ENCODE measurements at regions of chr7 and their contacts with region 1.

Region 1: DNA sequence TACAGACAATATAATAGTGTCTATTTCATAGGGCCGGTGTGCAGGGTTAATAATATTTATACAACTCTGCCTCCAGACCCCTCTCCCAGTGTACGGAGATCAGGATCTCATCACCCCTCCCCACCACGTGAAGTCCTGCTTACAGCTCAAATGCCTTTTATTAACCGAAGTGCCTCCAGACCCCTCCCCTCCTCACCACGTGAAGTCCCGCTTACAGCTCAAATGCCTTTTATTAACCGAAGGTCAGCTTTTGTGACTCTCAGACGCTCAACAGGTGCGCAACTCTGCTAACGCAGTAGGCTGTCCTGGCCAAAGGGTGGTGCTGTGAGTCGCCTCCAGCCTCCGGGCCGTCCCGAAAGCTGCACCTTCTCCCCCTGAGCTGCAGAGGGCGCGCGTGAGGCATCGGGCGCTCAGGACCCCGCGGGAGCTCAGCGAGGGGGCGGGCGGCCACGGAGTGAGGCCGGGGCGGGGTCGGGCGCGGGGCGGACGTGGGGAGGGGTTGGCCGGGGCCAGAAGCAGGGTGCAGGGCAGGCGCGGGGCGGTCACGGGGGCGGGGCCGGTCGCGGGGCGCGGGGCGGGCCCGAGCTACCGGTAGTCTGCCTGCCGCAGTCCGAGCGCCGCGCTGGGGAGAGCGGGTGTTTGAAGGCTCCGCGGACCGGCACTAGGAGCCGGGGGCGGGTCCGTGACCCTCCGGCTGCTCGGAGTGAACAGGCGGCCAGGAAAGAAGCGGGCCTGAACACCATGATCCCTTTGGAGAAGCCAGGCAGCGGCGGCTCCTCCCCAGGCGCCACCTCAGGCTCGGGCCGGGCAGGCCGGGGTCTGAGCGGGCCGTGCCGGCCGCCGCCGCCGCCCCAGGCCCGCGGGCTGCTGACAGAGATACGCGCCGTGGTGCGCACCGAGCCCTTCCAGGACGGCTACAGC is at the start of gene STK17A:
- DNase-seq: peak; percentile 94
- ATAC-seq: peak; percentile 84
- H3K4me3 Mint-ChIP-seq: peak within 1 kb of the TSS; percentile 92
- H3K27ac Mint-ChIP-seq: peak within 1 kb of the TSS; percentile 97
- H3K4me1 Mint-ChIP-seq: peaks cover 41% of the 10 kb centered on the region
- H3K27me3 Mint-ChIP-seq: no peaks in the 10 kb centered on the region
- CTCF ChIP-seq: peak; percentile 44
- total RNA-seq, gene STK17A: 67.1 and 68.6 TPM in 2 replicates

Region 2: DNA sequence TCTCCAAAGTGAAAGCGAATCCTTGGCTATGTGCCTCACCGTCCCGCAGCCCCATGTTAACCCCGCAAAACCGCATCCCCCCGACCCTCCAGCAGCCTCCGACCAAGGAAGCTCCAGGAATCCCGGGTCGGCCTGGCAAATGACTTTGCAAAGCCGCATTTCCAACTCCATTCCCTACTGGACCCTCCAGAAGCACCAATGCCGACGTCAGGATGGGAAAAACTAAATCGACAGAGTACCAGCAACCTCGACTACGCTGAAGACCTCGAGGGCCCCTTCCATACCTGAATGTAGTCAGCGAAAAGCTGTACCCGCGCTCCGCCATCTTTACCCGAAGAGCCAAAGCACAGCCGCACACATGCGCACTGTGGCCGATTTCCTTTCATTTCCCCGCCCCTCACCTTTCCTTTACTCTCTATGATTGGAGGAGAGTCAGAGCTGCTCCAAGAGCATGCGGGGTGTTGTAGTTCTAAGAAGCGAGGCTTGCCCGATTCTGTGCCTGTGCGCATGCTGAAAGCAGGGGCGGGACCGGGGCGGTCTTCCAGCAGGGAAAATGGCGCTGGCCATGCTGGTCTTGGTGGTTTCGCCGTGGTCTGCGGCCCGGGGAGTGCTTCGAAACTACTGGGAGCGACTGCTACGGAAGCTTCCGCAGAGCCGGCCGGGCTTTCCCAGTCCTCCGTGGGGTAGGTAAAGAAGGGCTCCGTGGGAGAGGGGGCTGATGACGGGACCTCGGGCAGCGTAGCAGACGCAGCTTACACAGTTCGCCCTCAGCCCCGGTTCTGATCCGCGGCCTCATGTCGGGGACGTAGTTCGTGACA is 650.7 kb before region 1 on chr7 and contains the starts of genes MRPL32 and PSMA2:
- CTCF ChIA-PET with region 1: interaction called, 10 read pairs
- POLR2A ChIA-PET with region 1: interaction called, 21 read pairs
- intact Hi-C with region 1: loop called (anchors 2 kb)
- DNase-seq: peak; percentile 88
- ATAC-seq: peak; percentile 100
- H3K4me3 Mint-ChIP-seq: peak within 1 kb of the TSS; percentile 100
- H3K27ac Mint-ChIP-seq: peak within 1 kb of the TSS; percentile 97
- H3K4me1 Mint-ChIP-seq: peaks cover 57% of the 10 kb centered on the region
- H3K27me3 Mint-ChIP-seq: no peaks in the 10 kb centered on the region
- CTCF ChIP-seq: no peak
- total RNA-seq, gene MRPL32: 38.8 and 39.5 TPM in 2 replicates
- total RNA-seq, gene PSMA2: 88.1 and 109 TPM in 2 replicates

Region 3: GRCh38 chr7:43535810-43536585 is 46.8 kb before region 1 on chr7:
- CTCF ChIA-PET with region 1: no interaction called
- POLR2A ChIA-PET with region 1: no interaction called
- intact Hi-C with region 1: no loop called
- DNase-seq: no peak
- ATAC-seq: no peak
- H3K4me3 Mint-ChIP-seq: no peak overlapping the region
- H3K27ac Mint-ChIP-seq: no peak overlapping the region
- H3K4me1 Mint-ChIP-seq: no peaks in the 10 kb centered on the region
- H3K27me3 Mint-ChIP-seq: peaks cover 10% of the 10 kb centered on the region
- CTCF ChIP-seq: no peak

Region 4: DNA sequence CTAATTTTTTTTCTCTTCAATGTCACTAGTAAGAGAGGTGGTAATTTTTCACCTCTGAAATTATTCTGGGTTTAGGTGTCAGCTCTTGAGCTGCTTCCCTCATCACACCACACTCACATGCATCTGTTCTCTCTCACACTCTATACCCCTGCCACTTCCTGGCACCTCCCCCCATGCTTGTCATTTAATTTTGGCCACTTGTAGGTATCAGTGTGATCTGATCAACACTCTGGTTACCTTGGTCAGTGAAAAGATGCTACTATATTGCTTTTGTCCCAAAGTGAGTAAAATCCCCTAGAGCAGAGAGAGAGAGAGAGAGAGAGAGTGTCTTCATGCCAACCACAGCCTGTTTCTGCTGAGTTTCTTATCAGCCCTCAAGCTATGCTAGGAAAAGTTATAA is 42.7 kb after region 1 on chr7:
- CTCF ChIA-PET with region 1: interaction called, 43 read pairs
- POLR2A ChIA-PET with region 1: interaction called, 41 read pairs
- intact Hi-C with region 1: loop called (anchors 2 kb)
- DNase-seq: no peak
- ATAC-seq: peak; percentile 76
- H3K4me3 Mint-ChIP-seq: peak overlapping the region; percentile 51
- H3K27ac Mint-ChIP-seq: peak overlapping the region; percentile 85
- H3K4me1 Mint-ChIP-seq: peaks cover 84% of the 10 kb centered on the region
- H3K27me3 Mint-ChIP-seq: no peaks in the 10 kb centered on the region
- CTCF ChIP-seq: no peak

Region 5: DNA sequence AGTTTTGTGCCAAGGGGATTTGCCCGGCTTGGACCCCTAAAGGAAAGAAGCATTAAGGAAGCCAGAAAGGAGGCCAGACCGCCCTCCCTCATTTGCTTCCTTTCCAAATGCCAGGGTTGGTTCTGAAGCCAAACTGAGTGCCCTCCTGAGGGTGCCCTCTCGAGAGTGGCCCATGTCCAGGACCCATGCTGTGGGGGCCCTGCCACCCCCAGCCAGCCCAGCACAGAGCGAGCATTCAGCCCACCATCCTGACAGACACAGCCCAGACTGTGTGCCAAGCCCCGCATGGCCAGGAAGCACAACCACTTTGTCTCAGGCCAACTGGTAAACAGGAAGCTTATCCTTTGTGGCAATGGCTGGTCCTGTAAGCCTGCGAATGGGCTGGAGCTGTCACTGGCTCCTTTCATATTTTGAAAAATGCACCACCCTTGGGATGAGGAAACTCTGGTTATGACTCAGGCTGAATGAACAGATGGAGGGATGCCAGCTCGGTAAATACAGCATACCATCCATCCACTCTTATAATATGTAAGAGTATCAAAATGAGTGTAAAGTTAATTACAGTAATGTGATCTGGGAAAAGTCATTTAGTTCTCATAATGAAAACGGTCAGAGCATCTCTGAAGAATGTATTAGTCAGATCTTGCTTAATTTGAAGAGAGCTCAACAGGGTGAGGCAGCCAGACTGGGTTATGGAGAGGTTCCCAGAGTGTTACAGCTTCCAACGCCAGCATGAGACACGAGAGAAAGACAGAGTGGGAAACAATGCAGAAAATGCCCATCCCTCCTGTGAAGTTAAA is 65.1 kb after region 1 on chr7:
- CTCF ChIA-PET with region 1: interaction called, 80 read pairs
- POLR2A ChIA-PET with region 1: interaction called, 342 read pairs
- intact Hi-C with region 1: loop called (anchors 1 kb)
- DNase-seq: no peak
- ATAC-seq: peak; percentile 4
- H3K4me3 Mint-ChIP-seq: peak overlapping the region; percentile 72
- H3K27ac Mint-ChIP-seq: peak overlapping the region; percentile 90
- H3K4me1 Mint-ChIP-seq: peaks cover 96% of the 10 kb centered on the region
- H3K27me3 Mint-ChIP-seq: no peaks in the 10 kb centered on the region
- CTCF ChIP-seq: no peak

Region 6: GRCh38 chr7:43693687-43694398 is 111.1 kb after region 1 on chr7:
- CTCF ChIA-PET with region 1: interaction called, 648 read pairs
- POLR2A ChIA-PET with region 1: interaction called, 295 read pairs
- intact Hi-C with region 1: no loop called
- DNase-seq: no peak
- ATAC-seq: no peak
- H3K4me3 Mint-ChIP-seq: no peak overlapping the region
- H3K27ac Mint-ChIP-seq: no peak overlapping the region
- H3K4me1 Mint-ChIP-seq: peaks cover 41% of the 10 kb centered on the region
- H3K27me3 Mint-ChIP-seq: no peaks in the 10 kb centered on the region
- CTCF ChIP-seq: no peak

Region 7: GRCh38 chr7:43729214-43729923 is 146.6 kb after region 1 on chr7 and contains the start of gene COA1:
- CTCF ChIA-PET with region 1: interaction called, 37 read pairs
- POLR2A ChIA-PET with region 1: interaction called, 23 read pairs
- intact Hi-C with region 1: loop called (anchors 1 kb)
- DNase-seq: peak; percentile 75
- ATAC-seq: peak; percentile 92
- H3K4me3 Mint-ChIP-seq: peak within 1 kb of the TSS; percentile 95
- H3K27ac Mint-ChIP-seq: peak within 1 kb of the TSS; percentile 88
- H3K4me1 Mint-ChIP-seq: peaks cover 40% of the 10 kb centered on the region
- H3K27me3 Mint-ChIP-seq: no peaks in the 10 kb centered on the region
- CTCF ChIP-seq: no peak
- total RNA-seq, gene COA1: 49.2 and 56.9 TPM in 2 replicates

Region 8: DNA sequence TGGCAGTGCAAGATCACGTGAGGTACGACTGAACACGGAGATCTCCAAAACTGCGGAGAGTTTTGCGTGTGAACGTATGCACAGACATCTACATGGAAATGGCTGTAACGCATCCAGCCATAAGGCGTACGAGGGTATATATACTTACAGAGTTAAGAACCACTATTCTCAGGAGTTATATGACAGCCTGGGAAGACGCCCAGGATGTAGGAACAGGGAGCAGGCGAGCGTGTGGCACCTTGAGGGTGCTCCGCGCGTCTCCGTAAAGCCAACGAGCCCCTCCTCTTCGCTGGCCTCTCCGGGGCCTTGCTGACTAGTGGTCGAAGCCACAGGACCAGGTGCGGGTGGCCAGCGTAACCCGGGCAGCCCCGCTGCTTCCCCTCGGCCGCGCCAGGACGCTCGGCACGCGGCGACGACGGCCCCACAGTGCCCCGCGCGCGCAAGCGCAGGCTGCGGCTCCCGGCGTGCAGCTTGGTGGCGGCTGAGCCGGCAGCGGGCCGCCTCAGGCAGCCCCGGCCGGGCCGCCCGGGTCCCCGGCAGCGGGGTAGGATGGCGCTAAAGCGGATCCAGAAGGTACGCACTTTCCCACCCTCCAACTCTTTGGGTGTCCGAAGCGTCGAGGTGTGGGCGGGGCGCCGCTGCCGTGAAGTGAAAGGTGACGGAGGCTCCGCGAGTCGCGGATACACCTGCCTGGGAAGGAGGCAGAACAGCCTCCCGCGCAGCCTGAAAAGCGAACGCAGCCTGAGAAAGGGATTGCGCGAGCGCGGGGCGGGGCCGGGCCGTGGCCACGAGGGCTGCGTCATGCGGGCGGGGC is 343.4 kb after region 1 on chr7 and contains the start of gene UBE2D4:
- CTCF ChIA-PET with region 1: interaction called, 4 read pairs
- POLR2A ChIA-PET with region 1: interaction called, 3 read pairs
- intact Hi-C with region 1: loop called (anchors 5 kb)
- DNase-seq: peak; percentile 89
- ATAC-seq: peak; percentile 88
- H3K4me3 Mint-ChIP-seq: peak within 1 kb of the TSS; percentile 87
- H3K27ac Mint-ChIP-seq: peak within 1 kb of the TSS; percentile 93
- H3K4me1 Mint-ChIP-seq: peaks cover 24% of the 10 kb centered on the region
- H3K27me3 Mint-ChIP-seq: no peaks in the 10 kb centered on the region
- CTCF ChIP-seq: no peak
- total RNA-seq, gene UBE2D4: 18.9 and 19.6 TPM in 2 replicates

Region 9: DNA sequence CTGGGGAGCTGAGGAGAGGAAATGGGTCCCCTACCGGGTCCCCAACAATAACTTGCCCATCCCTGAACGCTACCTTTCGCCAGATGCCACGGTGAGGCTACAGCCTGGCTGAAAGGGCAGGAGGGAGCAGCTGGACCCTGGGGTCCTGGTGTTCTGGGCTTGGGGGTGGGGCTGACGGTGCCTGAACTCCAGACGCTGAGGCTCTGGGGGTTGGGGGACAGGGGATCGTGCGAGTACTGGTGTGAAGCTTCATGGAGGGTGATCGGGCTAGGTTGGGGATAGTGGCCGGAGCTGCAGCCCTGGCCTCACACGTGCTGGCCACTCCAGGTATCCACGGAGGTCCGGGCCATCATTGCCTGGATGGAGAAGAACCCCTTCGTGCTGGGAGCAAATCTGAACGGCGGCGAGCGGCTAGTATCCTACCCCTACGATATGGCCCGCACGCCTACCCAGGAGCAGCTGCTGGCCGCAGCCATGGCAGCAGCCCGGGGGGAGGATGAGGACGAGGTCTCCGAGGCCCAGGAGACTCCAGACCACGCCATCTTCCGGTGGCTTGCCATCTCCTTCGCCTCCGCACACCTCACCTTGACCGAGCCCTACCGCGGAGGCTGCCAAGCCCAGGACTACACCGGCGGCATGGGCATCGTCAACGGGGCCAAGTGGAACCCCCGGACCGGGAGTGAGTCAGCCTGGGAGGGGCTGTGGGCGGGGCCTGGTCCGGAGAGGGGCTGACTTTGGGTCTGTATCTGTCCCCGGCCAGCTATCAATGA is 529.7 kb after region 1 on chr7:
- CTCF ChIA-PET with region 1: no interaction called
- POLR2A ChIA-PET with region 1: no interaction called
- intact Hi-C with region 1: no loop called
- DNase-seq: no peak
- ATAC-seq: no peak
- H3K4me3 Mint-ChIP-seq: no peak overlapping the region
- H3K27ac Mint-ChIP-seq: no peak overlapping the region
- H3K4me1 Mint-ChIP-seq: no peaks in the 10 kb centered on the region
- H3K27me3 Mint-ChIP-seq: no peaks in the 10 kb centered on the region
- CTCF ChIP-seq: no peak

Measured in activated B cell treated with CpG ODN at 0.5 μM for 24 hours (primary cell).